Vagina (tissue), 2 donors: ENCODE measurements at regions of chr1 and their contacts with region 1.

Region 1: GRCh38 chr1:167627865-167628641 is 2.0 kb upstream of the RCSD1 start:
- DNase-seq: no peak
- H3K4me3 ChIP-seq: no peak overlapping the region
- H3K27ac ChIP-seq: no peak overlapping the region
- H3K4me1 ChIP-seq: no peaks in the 10 kb centered on the region
- H3K27me3 ChIP-seq: no peaks in the 10 kb centered on the region
- CTCF ChIP-seq: no peak
- POLR2A ChIP-seq: no peak

Region 2: DNA sequence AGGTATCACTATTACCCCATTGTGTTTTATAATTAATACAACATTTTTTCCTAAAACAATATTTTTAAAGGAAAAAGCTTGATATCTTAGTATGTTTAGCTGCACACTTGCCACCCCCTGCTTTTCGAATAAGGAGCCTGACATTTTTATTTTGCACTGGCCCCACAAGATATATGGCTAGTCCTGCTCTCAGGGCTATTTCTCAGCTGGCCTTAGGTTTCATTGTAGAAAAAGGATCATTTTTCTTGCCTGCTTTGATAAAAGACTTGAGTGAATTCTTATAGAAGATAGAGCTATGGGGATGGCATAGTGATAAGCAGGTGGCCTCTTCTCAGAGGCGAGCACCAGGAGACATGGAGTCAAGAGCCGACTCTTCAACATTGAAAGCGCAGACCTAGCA is 1628.2 kb before region 1 on chr1:
- intact Hi-C with region 1: loop called (anchors 5 kb)
- DNase-seq: no peak
- H3K4me3 ChIP-seq: no peak overlapping the region
- H3K27ac ChIP-seq: no peak overlapping the region
- H3K4me1 ChIP-seq: no peaks in the 10 kb centered on the region
- H3K27me3 ChIP-seq: no peaks in the 10 kb centered on the region
- CTCF ChIP-seq: no peak
- POLR2A ChIP-seq: no peak